GM10248 (cell line): ENCODE measurements at regions of chr17 and their contacts with region 1.

Region 1: DNA sequence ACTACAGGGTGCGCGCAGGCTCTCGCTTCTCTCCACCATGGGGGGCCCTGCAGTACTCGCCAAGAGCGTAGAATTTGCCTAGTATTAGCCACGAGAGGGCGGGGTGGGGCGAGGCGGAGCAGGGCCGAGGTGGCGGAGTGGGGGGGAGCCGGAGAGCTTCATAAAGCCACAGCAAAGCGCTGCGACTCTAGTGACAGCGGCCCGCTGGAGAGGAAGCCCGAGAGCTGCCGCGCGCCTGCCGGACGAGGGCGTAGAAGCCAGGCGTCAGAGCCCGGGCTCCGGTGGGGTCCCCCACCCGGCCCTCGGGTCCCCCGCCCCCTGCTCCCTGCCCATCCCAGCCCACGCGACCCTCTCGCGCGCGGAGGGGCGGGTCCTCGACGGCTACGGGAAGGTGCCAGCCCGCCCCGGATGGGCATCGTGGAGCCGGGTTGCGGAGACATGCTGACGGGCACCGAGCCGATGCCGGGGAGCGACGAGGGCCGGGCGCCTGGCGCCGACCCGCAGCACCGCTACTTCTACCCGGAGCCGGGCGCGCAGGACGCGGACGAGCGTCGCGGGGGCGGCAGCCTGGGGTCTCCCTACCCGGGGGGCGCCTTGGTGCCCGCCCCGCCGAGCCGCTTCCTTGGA is at the start of gene TBX21:
- DNase-seq: peak; percentile 91
- CTCF ChIP-seq: peak; percentile 36

Region 2: GRCh38 chr17:47708863-47709541 is 24.2 kb before region 1 on chr17:
- CTCF ChIA-PET with region 1: interaction called, 15 read pairs
- POLR2A ChIA-PET with region 1: no interaction called
- DNase-seq: no peak
- CTCF ChIP-seq: no peak

Region 3: GRCh38 chr17:47717261-47717697 is 15.9 kb before region 1 on chr17:
- CTCF ChIA-PET with region 1: interaction called, 72 read pairs
- POLR2A ChIA-PET with region 1: interaction called, 7 read pairs
- DNase-seq: no peak
- CTCF ChIP-seq: peak; percentile 54